Ovary (tissue), 10 donors: ENCODE measurements at regions of chrX and their contacts with region 1.

Region 1: GRCh38 chrX:51459125-51459524 is 37.3 kb downstream of the NUDT11 start:
- DNase-seq: no peak
- H3K4me3 ChIP-seq: no peak overlapping the region
- H3K27ac ChIP-seq: no peak overlapping the region
- H3K4me1 ChIP-seq: no peaks in the 10 kb centered on the region
- H3K27me3 ChIP-seq: no peaks in the 10 kb centered on the region
- CTCF ChIP-seq: no peak
- EP300 ChIP-seq: no peak
- POLR2A ChIP-seq: no peak

Region 2: GRCh38 chrX:51144852-51145442 is 314.2 kb before region 1 on chrX:
- intact Hi-C with region 1: loop called in 2 of 4 experiments (anchors 10 kb)
- DNase-seq: no peak
- H3K4me3 ChIP-seq: no peak overlapping the region
- H3K27ac ChIP-seq: no peak overlapping the region
- H3K4me1 ChIP-seq: no peaks in the 10 kb centered on the region
- H3K27me3 ChIP-seq: no peaks in the 10 kb centered on the region
- CTCF ChIP-seq: no peak
- EP300 ChIP-seq: no peak
- POLR2A ChIP-seq: no peak

Region 3: DNA sequence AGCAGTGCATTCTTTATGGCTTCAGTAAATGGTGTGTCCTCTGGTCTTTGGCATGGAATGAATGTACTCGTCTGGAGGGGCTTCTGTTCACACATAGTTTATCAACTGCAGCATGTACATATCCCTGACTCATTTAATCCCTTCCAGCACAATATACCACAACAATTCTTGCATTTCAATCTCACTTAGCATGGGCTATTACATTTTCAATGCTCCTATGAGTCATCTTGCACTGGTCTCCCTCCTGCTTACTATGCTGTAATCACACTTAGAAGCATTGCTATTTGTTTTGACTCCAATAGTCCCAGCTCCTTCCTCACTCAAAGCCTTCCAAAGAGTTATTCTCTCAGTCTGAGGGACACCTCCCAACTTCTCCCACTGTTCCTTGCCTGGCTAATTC is 307.4 kb before region 1 on chrX:
- intact Hi-C with region 1: loop called in 2 of 4 experiments (anchors 10 kb)
- DNase-seq: no peak
- H3K4me3 ChIP-seq: no peak overlapping the region
- H3K27ac ChIP-seq: no peak overlapping the region
- H3K4me1 ChIP-seq: no peaks in the 10 kb centered on the region
- H3K27me3 ChIP-seq: no peaks in the 10 kb centered on the region
- CTCF ChIP-seq: no peak
- EP300 ChIP-seq: no peak
- POLR2A ChIP-seq: no peak

Region 4: GRCh38 chrX:51476930-51477329 is 17.8 kb after region 1 on chrX:
- intact Hi-C with region 1: no loop called
- DNase-seq: no peak
- H3K4me3 ChIP-seq: no peak overlapping the region
- H3K27ac ChIP-seq: no peak overlapping the region
- H3K4me1 ChIP-seq: no peaks in the 10 kb centered on the region
- H3K27me3 ChIP-seq: no peaks in the 10 kb centered on the region
- CTCF ChIP-seq: no peak
- EP300 ChIP-seq: no peak
- POLR2A ChIP-seq: no peak